Vagina (tissue), 2 donors: ENCODE measurements at regions of chr9 and their contacts with region 1.

Region 1: DNA sequence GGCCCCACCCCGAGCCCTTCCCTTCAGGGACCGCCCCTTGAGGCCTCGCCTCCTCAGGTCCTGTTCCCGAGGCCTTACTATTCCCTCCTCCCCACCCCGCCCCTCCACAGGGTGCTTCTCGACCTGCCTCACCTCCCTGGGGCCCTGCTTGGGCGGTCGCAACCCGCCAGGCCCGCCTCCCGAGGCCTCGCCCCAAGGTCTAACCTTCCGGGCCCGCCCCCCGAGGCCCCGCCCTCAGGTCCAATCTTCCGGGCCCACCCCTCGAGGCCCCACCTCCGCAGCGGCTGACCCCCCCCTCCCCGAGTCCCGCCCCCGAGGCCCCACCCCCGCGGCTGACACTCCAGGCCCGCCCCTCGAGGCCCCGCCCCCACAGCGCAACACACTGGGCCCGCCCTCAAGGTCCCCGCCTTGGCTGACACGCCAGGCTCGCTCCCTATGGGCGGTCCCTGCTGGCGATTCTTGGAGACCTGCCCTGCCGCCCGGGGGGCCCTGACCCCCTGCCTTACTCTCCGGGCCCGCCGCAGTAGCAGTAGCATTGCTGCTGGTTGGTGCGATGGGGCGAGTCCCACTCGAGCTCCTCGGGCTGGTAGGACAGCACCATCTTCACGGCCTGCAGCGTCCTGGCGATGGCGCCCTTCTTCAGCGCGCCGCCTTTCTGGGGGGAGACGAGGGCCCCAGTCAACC is 8.2 kb downstream of the PHF19 start:
- DNase-seq: peak; percentile 97 to 99
- H3K4me3 ChIP-seq: peak overlapping the region; percentile 44 to 53
- H3K27ac ChIP-seq: peak overlapping the region; percentile 91
- H3K4me1 ChIP-seq: peaks cover 13% of the 10 kb centered on the region
- H3K27me3 ChIP-seq: no peaks in the 10 kb centered on the region
- CTCF ChIP-seq: peak; percentile 28 to 40 (median 32)
- POLR2A ChIP-seq: peak in 1 of 2 donors; percentile 75

Region 2: DNA sequence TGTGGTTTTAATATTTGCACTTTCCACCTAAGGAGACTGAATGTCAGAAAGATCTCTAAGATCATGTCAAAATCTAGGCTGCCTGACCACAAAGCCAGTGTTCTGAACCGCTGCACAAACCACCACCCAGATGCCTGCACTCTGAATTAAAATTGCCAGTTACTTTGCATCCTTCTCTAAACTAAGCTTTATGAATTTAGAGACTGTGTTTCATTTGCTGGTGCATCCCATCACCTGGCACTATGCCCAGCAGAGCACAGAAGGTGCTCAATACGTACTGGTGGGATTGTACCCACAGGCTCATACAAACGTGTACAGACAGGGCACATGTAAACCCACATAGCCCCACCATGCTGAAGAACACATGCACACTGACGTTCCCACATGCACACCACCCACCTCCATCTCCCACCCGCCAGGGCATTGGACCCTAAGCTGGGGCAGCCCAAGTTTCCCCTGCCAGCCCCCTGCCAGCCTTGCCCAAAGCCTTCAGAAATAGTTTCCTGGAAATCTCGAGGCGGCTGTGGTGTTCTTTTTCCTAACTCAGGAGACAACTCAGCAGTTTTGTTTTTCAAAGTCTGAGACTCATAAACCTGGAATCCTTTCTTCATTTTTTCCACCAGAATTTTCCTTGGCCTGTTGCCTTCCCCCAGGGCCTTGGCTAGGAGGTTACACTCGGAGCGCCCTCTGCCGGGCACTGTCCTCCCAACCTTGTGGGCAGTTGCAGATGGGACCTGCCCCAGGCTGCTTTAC is 67.4 kb after region 1 on chr9:
- intact Hi-C with region 1: loop called (anchors 5 kb)
- DNase-seq: peak in 1 of 2 donors; percentile 92
- H3K4me3 ChIP-seq: peak overlapping the region; percentile 16 to 31
- H3K27ac ChIP-seq: peak overlapping the region; percentile 93
- H3K4me1 ChIP-seq: peaks cover 65% of the 10 kb centered on the region
- H3K27me3 ChIP-seq: no peaks in the 10 kb centered on the region
- CTCF ChIP-seq: peak; percentile 63 to 94 (median 72)
- POLR2A ChIP-seq: no peak

Region 3: GRCh38 chr9:121074635-121075385 is 206.0 kb after region 1 on chr9 and contains the start of gene CNTRL:
- intact Hi-C with region 1: loop called (anchors 10 kb)
- DNase-seq: peak in 1 of 2 donors; percentile 93
- H3K4me3 ChIP-seq: peak within 1 kb of the TSS; percentile 61 to 77
- H3K27ac ChIP-seq: peak within 1 kb of the TSS; percentile 81
- H3K4me1 ChIP-seq: peaks cover 21% of the 10 kb centered on the region
- H3K27me3 ChIP-seq: no peaks in the 10 kb centered on the region
- CTCF ChIP-seq: no peak
- POLR2A ChIP-seq: peak in 1 of 2 donors; percentile 21
- total RNA-seq, gene CNTRL: 13.8 TPM